ACHN (cell line): ENCODE measurements at regions of chr7 and their contacts with region 1.

Region 1: DNA sequence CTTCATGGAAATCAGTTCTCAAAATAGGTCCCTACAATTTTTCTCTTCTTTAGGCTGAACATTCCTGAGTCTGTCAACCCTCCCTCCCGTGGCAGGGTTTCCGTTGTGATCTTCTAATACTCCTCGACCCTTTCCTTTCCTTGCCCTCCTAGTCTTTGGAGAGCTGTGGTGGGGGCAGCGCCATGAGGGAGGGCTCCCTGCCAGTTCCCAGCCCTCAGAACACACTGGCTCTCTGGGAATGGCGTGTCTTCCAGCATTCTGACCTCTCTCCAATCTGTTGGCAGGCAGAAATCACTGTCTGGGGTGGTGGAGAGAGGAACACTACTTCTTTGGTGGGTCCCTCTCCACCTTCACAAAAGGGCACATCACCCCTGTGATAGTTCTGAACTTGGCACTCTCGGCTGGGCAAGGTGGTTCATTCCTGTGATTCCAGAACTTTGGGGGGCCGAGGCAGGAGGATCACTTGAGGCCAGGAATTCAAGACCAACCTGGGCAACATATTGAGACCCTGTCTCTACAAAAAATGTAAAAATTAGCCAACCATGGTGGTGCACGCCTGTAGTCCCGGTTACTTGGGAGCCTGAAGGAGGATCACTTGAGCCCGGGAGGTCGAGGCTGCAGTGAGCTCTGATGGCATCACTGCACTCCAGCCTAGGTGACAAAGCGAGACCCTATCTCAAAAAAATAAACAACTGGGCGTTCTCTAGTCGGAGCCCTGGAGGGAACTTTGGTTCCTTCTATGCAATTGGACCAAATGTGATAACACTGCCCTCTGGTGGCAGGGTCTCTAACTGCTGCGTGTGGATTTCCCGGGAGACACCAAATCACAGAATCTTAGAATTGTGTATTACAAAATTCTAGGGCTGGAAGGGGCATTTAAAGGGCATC is 13.1 kb upstream of the ARPC1A start:
- DNase-seq: peak; percentile 80

Region 2: GRCh38 chr7:99050971-99051370 is 261.6 kb before region 1 on chr7:
- in situ Hi-C with region 1: loop called (anchors 25 kb)
- DNase-seq: no peak